ENCODE measurements at regions of chr6 and their contacts with region 1.

Region 1: DNA sequence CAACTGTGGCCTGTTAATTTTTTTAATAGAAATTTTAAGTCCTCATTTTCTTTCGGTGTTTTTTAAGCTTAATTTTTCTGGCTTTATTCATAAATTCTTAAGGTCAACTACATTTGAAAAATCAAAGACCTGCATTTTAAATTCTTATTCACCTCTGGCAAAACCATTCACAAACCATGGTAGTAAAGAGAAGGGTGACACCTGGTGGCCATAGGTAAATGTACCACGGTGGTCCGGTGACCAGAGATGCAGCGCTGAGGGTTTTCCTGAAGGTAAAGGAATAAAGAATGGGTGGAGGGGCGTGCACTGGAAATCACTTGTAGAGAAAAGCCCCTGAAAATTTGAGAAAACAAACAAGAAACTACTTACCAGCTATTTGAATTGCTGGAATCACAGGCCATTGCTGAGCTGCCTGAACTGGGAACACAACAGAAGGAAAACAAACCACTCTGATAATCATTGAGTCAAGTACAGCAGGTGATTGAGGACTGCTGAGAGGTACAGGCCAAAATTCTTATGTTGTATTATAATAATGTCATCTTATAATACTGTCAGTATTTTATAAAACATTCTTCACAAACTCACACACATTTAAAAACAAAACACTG is 10.1 kb downstream of the HFE start:
- DNase-seq: peak; percentile 72
- H3K4me3 Mint-ChIP-seq: no peak overlapping the region
- H3K27ac Mint-ChIP-seq: no peak overlapping the region
- H3K4me1 Mint-ChIP-seq: peaks cover 4% of the 10 kb centered on the region
- H3K27me3 Mint-ChIP-seq: no peaks in the 10 kb centered on the region

Region 2: DNA sequence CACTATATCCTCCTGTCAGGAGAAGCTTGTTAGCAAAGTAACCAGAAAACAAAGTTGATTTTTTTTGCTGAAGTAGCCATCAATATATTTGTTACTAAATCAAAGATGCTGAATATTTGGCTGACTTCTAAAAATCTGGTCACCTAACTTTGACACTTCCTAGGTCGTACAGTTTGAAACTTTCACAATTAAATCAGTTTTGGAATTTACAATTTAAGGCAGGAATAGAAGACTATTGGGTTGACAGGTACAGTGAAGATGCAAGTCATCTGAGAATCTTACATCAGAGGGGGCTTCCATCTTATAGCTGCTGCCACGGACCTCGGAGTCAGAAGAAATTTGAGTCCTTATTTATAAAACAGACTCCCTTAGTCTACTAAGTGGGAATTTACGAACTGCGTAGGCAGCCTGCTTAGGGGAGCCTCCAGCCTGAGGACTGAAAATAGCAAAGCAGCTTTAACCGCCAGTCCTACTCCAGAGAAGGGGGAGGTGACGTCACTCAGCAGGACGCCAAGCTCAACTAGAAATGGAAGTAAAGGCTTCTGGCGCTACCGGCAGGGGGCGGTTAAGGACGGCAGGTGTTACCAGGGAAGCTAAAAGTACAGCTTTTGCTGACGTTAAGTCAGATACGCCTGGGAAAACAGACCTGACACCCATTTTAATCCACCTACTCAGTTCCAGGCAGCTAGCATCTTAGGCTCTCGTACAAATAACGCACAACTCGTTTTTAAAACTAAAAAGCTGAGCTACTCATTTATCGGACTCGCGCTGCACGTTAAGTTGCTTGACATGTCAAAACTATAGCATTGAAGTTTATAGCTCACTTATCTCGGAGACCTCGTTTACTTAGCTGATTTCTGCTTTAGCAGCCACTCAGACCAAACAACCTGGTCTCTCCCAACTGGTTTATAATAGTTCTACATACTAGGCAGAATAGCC is 71.2 kb before region 1 on chr6:
- CTCF ChIA-PET with region 1: interaction called, 11 read pairs
- POLR2A ChIA-PET with region 1: no interaction called
- intact Hi-C with region 1: loop called (anchors 2 kb)
- DNase-seq: peak; percentile 96
- H3K4me3 Mint-ChIP-seq: peak overlapping the region; percentile 87
- H3K27ac Mint-ChIP-seq: peak overlapping the region; percentile 91
- H3K4me1 Mint-ChIP-seq: peaks cover 53% of the 10 kb centered on the region
- H3K27me3 Mint-ChIP-seq: peaks cover 5% of the 10 kb centered on the region

Region 3: DNA sequence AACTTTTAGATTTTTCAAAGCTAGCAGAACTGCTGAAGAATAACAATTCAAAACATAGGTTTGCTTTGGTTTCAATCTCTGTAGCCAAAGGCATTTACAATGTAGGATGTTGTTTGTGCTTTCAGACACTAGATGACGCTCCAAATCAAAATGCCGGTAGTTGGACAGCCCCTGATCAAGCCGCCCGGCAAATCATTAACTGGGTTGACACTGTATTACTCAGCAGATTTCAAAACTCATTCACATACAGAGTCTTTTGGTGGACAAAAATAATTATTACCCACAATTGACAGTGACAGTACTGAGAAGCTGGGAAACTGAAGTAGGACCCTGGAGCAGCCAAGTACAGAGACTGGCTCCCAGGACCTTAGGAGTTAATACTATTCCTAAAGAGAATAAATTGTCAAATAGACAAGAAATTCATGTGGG is 31.4 kb before region 1 on chr6:
- CTCF ChIA-PET with region 1: interaction called, 478 read pairs
- POLR2A ChIA-PET with region 1: interaction called, 3 read pairs
- intact Hi-C with region 1: loop called (anchors 1 kb)
- DNase-seq: peak; percentile 65
- H3K4me3 Mint-ChIP-seq: no peak overlapping the region
- H3K27ac Mint-ChIP-seq: no peak overlapping the region
- H3K4me1 Mint-ChIP-seq: peaks cover 4% of the 10 kb centered on the region
- H3K27me3 Mint-ChIP-seq: no peaks in the 10 kb centered on the region

Measured in activated CD4-positive, alpha-beta memory T cell treated with anti-CD3 and anti-CD28 coated beads for 36 hours (primary cell).